B cell (primary cell): ENCODE measurements at regions of chr3 and their contacts with region 1.

Region 1: GRCh38 chr3:113575206-113575605 is 42.9 kb downstream of the SIDT1 start:
- DNase-seq: no peak
- ATAC-seq: no peak
- H3K4me3 ChIP-seq: no peak overlapping the region
- H3K4me3 Mint-ChIP-seq: no peak overlapping the region
- H3K27ac ChIP-seq: peak overlapping the region in 1 of 2 donors; percentile 46
- H3K27ac Mint-ChIP-seq: no peak overlapping the region
- H3K4me1 ChIP-seq: peaks cover 2 to 3% of the 10 kb centered on the region in 2 donors
- H3K4me1 Mint-ChIP-seq: peaks cover 4% of the 10 kb centered on the region
- H3K27me3 ChIP-seq: no peaks in the 10 kb centered on the region
- H3K27me3 Mint-ChIP-seq: no peaks in the 10 kb centered on the region
- CTCF ChIP-seq: no peak

Region 2: DNA sequence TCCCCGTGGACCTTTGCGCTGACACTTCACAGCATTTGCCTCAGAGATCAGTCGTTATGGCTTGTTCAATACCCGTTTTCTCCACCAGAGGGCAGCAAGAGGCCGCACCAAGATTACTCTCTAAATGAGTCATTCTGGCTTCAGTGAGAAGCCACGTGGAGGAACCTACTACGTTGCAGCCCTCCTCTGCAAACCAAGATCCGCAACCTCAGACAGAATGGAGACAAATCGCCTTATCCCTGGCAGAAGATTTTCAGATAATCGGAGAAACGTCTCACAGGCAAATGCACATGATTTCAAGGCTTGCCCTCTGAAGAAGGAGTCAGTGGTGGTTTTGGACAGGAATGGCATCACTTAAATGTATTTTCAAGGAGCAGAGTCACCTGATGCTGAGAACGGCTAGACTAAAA is 523.9 kb before region 1 on chr3:
- CTCF ChIA-PET with region 1: no interaction called
- POLR2A ChIA-PET with region 1: no interaction called
- intact Hi-C with region 1: loop called (anchors 1 kb)
- DNase-seq: peak; percentile 88
- ATAC-seq: peak; percentile 100
- H3K4me3 ChIP-seq: no peak overlapping the region
- H3K4me3 Mint-ChIP-seq: no peak overlapping the region
- H3K27ac ChIP-seq: no peak overlapping the region
- H3K27ac Mint-ChIP-seq: no peak overlapping the region
- H3K4me1 ChIP-seq: peaks cover 0 to 4% of the 10 kb centered on the region in 2 donors
- H3K4me1 Mint-ChIP-seq: peaks cover 2% of the 10 kb centered on the region
- H3K27me3 ChIP-seq: no peaks in the 10 kb centered on the region
- H3K27me3 Mint-ChIP-seq: no peaks in the 10 kb centered on the region
- CTCF ChIP-seq: peak; percentile 95

Region 3: GRCh38 chr3:113166719-113167492 is 408.3 kb before region 1 on chr3:
- CTCF ChIA-PET with region 1: no interaction called
- POLR2A ChIA-PET with region 1: no interaction called
- intact Hi-C with region 1: no loop called
- DNase-seq: no peak
- ATAC-seq: no peak
- H3K4me3 ChIP-seq: no peak overlapping the region
- H3K4me3 Mint-ChIP-seq: no peak overlapping the region
- H3K27ac ChIP-seq: no peak overlapping the region
- H3K27ac Mint-ChIP-seq: no peak overlapping the region
- H3K4me1 ChIP-seq: no peaks in the 10 kb centered on the region
- H3K4me1 Mint-ChIP-seq: no peaks in the 10 kb centered on the region
- H3K27me3 ChIP-seq: no peaks in the 10 kb centered on the region
- H3K27me3 Mint-ChIP-seq: peaks cover 12% of the 10 kb centered on the region
- CTCF ChIP-seq: no peak

Region 4: DNA sequence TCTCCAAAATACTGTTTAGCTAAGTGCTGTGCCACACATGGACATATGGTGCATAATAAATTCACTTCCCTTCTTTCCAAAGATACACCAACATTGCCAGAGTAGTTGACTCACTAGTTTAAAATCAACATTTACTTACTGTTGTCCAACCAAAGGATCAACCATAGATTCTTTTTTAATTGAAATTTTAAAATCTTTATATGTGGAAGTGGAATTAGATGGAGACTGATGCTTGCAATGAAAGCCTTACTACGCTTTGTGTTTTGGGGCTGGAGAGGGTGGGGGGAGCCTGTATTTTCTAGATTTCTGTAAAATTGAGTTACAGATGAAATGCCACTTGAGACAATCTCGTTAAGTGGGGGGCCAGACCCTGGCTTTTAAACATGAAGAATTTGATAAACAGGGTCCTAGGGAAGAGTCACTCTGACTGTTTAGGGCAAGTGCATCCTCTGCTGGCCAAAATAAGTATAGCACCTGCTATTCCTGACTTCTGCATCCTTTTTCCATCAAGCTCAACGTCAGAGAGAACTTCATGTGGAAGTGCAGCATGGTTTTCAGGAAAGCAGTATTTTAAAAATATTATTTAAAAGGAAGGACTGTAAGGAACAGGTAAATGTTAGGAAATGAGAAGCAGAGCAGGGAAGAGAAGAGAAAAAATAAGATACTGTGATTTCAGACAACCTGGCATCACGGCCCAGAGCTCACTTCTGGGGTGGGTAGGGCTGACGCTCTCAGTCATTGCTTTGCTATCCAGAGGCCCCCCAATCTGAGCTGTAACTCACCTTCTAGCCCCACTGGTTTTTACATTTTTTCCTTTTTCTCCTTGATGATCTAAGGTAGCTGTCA is 287.2 kb before region 1 on chr3:
- CTCF ChIA-PET with region 1: interaction called, 12 read pairs
- POLR2A ChIA-PET with region 1: no interaction called
- intact Hi-C with region 1: no loop called
- DNase-seq: peak; percentile 69
- ATAC-seq: peak; percentile 69
- H3K4me3 ChIP-seq: no peak overlapping the region
- H3K4me3 Mint-ChIP-seq: no peak overlapping the region
- H3K27ac ChIP-seq: no peak overlapping the region
- H3K27ac Mint-ChIP-seq: no peak overlapping the region
- H3K4me1 ChIP-seq: no peaks in the 10 kb centered on the region
- H3K4me1 Mint-ChIP-seq: no peaks in the 10 kb centered on the region
- H3K27me3 ChIP-seq: no peaks in the 10 kb centered on the region
- H3K27me3 Mint-ChIP-seq: no peaks in the 10 kb centered on the region
- CTCF ChIP-seq: peak; percentile 100

Region 5: GRCh38 chr3:113507501-113508067 is 67.6 kb before region 1 on chr3:
- CTCF ChIA-PET with region 1: interaction called, 10 read pairs
- POLR2A ChIA-PET with region 1: no interaction called
- intact Hi-C with region 1: no loop called
- DNase-seq: no peak
- ATAC-seq: no peak
- H3K4me3 ChIP-seq: no peak overlapping the region
- H3K4me3 Mint-ChIP-seq: no peak overlapping the region
- H3K27ac ChIP-seq: no peak overlapping the region
- H3K27ac Mint-ChIP-seq: no peak overlapping the region
- H3K4me1 ChIP-seq: no peaks in the 10 kb centered on the region
- H3K4me1 Mint-ChIP-seq: peaks cover 6% of the 10 kb centered on the region
- H3K27me3 ChIP-seq: no peaks in the 10 kb centered on the region
- H3K27me3 Mint-ChIP-seq: no peaks in the 10 kb centered on the region
- CTCF ChIP-seq: no peak

Region 6: GRCh38 chr3:113531826-113532697 is 43.1 kb before region 1 on chr3 and contains the start of gene SIDT1:
- CTCF ChIA-PET with region 1: interaction called, 9 read pairs
- POLR2A ChIA-PET with region 1: no interaction called
- intact Hi-C with region 1: loop called (anchors 5 kb)
- DNase-seq: peak; percentile 89
- ATAC-seq: peak; percentile 81
- H3K4me3 ChIP-seq: peak within 1 kb of the TSS; percentile 86 to 96 (median 95)
- H3K4me3 Mint-ChIP-seq: peak within 1 kb of the TSS; percentile 93
- H3K27ac ChIP-seq: peak within 1 kb of the TSS; percentile 86 to 87
- H3K27ac Mint-ChIP-seq: peak within 1 kb of the TSS; percentile 96
- H3K4me1 ChIP-seq: peaks cover 35 to 36% of the 10 kb centered on the region in 2 donors
- H3K4me1 Mint-ChIP-seq: peaks cover 46% of the 10 kb centered on the region
- H3K27me3 ChIP-seq: no peaks in the 10 kb centered on the region
- H3K27me3 Mint-ChIP-seq: peaks cover 6% of the 10 kb centered on the region
- CTCF ChIP-seq: no peak
- total RNA-seq, gene SIDT1: 75.4 and 84.4 TPM in 2 replicates

Region 7: DNA sequence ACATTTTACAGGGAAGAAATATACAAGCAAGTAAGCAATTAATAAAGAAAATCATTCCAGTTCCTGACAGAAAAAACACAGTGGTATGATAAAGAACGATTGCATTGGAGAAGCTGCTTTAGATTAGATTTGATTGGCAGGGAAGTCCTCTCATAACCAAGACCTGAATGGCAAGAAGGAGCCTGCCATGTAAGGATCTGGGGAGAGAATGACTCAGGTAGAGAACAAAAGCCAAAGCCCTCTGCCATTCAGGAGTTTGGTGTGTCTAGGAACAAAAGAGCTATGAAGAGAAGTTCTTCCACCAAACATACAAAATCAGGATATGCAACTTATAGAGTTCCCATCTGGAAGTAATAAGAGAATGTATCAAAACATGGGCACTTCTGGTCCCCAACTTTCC is 14.8 kb after region 1 on chr3:
- CTCF ChIA-PET with region 1: interaction called, 18 read pairs
- POLR2A ChIA-PET with region 1: no interaction called
- intact Hi-C with region 1: no loop called
- DNase-seq: no peak
- ATAC-seq: no peak
- H3K4me3 ChIP-seq: no peak overlapping the region
- H3K4me3 Mint-ChIP-seq: no peak overlapping the region
- H3K27ac ChIP-seq: no peak overlapping the region
- H3K27ac Mint-ChIP-seq: no peak overlapping the region
- H3K4me1 ChIP-seq: no peaks in the 10 kb centered on the region
- H3K4me1 Mint-ChIP-seq: no peaks in the 10 kb centered on the region
- H3K27me3 ChIP-seq: no peaks in the 10 kb centered on the region
- H3K27me3 Mint-ChIP-seq: no peaks in the 10 kb centered on the region
- CTCF ChIP-seq: no peak